PC-9 (cell line): ENCODE measurements at regions of chr6 and their contacts with region 1.

Region 1: GRCh38 chr6:111873178-111874024 is at the start of gene FYN:
- DNase-seq: peak; percentile 95 to 98
- H3K4me3 ChIP-seq: peak within 1 kb of the TSS; percentile 76
- H3K27ac ChIP-seq: peak within 1 kb of the TSS; percentile 49
- H3K4me1 ChIP-seq: peaks cover 28% of the 10 kb centered on the region
- H3K27me3 ChIP-seq: no peaks in the 10 kb centered on the region
- CTCF ChIP-seq: no peak
- total RNA-seq, gene FYN: 53.3 and 80.3 TPM in 2 replicates

Region 2: DNA sequence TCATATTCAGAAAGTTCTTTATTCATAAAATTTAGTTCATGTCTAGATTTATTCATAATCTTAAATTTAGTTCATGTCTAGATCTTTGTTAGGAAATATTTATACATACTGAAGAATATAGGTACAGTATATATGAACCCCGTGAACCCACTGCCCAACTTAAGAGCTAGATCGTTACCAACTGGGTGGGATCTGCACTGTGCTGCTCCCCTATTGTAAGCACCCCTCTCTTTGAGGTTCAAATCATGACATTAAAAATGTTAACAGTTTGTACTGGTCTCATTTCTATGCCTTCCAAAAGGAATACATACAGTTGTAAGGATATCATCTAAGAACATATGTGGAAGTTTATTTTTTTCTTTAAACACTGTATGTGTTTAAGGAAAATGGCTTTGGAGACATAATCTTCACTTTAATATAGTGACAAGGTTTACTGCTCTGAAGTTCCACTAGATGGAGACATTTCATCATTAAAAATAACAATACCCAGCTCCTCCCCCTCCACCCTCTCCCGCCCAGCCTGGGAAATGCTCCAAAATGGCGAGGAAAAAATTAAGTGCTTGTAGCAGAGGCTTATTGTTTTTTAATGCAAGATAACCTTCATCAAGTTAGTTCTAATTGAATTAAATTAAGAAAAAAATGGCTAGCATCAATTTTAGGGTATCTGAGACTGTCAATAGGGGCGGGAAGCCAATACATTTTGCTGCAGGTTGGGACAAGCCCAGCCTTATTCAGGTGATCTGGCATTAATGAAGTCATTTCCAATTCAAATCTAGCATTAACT is 163.6 kb before region 1 on chr6:
- CTCF ChIA-PET with region 1: no interaction called
- POLR2A ChIA-PET with region 1: no interaction called
- intact Hi-C with region 1: loop called (anchors 2 kb)
- DNase-seq: peak; percentile 54 to 56
- H3K4me3 ChIP-seq: no peak overlapping the region
- H3K27ac ChIP-seq: no peak overlapping the region
- H3K4me1 ChIP-seq: 0 out of 2 replicates have a peak, but pooled peaks cover 5% of the 10 kb centered on the region
- H3K27me3 ChIP-seq: no peaks in the 10 kb centered on the region
- CTCF ChIP-seq: peak; percentile 91

Region 3: GRCh38 chr6:111799576-111800258 is 73.7 kb before region 1 on chr6:
- CTCF ChIA-PET with region 1: no interaction called
- POLR2A ChIA-PET with region 1: interaction called, 5 read pairs
- intact Hi-C with region 1: loop called (anchors 5 kb)
- DNase-seq: no peak
- H3K4me3 ChIP-seq: no peak overlapping the region
- H3K27ac ChIP-seq: peak overlapping the region; percentile 74
- H3K4me1 ChIP-seq: peaks cover 72% of the 10 kb centered on the region
- H3K27me3 ChIP-seq: no peaks in the 10 kb centered on the region
- CTCF ChIP-seq: no peak

Region 4: DNA sequence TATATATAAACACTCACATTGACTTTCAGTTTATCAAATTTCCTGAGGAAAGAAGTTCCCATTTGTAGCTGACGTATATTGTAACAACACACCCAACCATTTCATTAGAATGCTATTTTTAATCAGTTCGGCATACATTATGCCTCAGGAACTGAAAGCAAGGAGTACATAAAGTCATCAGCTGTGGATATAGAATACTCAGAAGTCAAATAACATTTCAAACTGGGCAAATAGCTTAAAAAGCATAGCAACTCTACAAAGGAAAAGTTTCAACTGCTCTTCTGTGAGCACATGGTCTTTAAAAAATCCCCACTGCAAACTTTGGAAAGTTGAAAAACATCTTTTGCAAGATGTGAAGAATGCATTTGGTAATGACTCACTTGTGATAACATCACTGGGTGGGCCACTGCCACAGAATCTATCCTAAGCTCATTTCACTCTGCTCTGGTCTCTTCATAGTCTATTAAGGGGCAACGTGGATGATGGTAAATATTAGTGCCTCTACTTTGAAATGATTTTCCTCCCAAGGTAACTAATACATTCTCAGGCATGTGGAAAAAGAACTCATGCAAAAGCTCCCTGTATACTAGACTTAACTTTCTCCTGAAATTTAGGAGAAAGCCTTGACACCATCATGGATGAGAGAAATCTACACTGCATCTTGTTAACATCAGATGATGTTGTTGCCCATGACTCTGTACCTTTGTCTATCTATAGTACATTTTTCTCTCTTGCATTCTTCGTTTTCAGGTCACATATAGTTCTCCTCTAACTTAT is 49.4 kb before region 1 on chr6:
- CTCF ChIA-PET with region 1: no interaction called
- POLR2A ChIA-PET with region 1: no interaction called
- intact Hi-C with region 1: loop called (anchors 5 kb)
- DNase-seq: peak in 1 of 2 experiments; percentile 83
- H3K4me3 ChIP-seq: peak overlapping the region; percentile 6; the same call in 1 of the 2 replicates
- H3K27ac ChIP-seq: peak overlapping the region; percentile 78
- H3K4me1 ChIP-seq: peaks cover 33% of the 10 kb centered on the region
- H3K27me3 ChIP-seq: no peaks in the 10 kb centered on the region
- CTCF ChIP-seq: no peak

Region 5: DNA sequence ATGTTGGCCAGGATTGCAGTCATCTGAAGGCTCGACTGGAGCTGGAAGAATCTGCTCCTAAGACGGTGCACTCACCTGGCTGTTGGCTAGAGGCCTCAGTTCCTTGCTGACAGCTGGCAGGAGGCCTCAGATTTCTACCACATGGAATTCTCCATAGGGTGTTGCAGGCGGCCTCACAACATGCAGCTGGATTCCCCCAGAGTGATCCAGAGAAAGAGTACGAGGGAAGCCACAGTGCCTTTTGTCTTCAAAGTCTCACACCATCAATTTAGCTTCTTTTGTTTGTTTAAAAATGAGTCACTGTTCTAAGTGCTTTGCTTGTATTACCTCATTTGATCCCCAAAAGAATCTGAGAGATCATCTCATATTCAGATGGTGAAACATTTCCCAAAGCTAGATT is 65.3 kb after region 1 on chr6:
- CTCF ChIA-PET with region 1: no interaction called
- POLR2A ChIA-PET with region 1: no interaction called
- intact Hi-C with region 1: no loop called
- DNase-seq: peak in 1 of 2 experiments; percentile 67
- H3K4me3 ChIP-seq: no peak overlapping the region
- H3K27ac ChIP-seq: no peak overlapping the region
- H3K4me1 ChIP-seq: 0 out of 2 replicates have a peak, but pooled peaks cover 10% of the 10 kb centered on the region
- H3K27me3 ChIP-seq: no peaks in the 10 kb centered on the region
- CTCF ChIP-seq: no peak

Region 6: DNA sequence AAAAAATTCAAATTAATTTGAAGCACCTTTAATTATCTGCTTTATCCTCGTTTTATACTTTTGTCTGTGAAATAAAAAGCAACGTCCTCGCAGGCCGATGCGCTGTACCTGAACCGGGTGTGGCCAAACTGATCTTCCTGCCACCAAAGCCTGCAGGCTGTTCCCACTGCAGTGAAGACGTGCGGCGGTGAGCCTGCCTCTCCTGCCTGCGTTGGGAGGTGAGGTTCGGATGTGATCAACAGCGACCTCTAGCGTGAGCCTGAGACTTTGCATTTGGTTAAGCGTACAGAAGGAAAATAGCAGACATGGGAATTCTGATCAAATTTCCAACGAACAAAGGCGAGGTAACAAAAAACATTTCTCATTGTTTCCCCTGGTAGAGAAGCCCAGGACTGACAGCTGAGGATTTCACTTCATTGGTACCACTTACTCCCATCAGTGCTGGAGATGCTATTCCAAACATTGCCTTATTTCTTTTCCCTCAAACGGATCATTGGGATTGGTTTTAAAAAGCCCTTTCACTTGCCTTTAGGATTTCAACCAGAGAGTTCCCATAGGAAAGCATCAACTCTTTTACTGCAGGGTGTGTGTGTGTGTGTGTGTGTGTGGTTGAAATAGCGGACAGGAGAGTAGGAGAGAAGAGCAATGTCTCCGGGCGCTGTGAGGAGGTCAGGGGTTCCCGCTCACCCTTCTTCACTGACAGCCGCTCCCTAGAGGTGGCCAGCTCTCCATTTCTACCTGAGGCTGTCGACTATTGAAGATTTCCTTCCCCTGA is 123.9 kb after region 1 on chr6:
- CTCF ChIA-PET with region 1: no interaction called
- POLR2A ChIA-PET with region 1: no interaction called
- intact Hi-C with region 1: loop called (anchors 5 kb)
- DNase-seq: peak; percentile 79 to 82
- H3K4me3 ChIP-seq: no peak overlapping the region
- H3K27ac ChIP-seq: no peak overlapping the region
- H3K4me1 ChIP-seq: peaks cover 22% of the 10 kb centered on the region
- H3K27me3 ChIP-seq: no peaks in the 10 kb centered on the region
- CTCF ChIP-seq: peak; percentile 99